Activated B cell treated with CpG ODN at 0.5 μM for 24 hours (primary cell): ENCODE measurements at regions of chrX and their contacts with region 1.

Region 1: GRCh38 chrX:71095543-71095911 is at the start of gene FOXO4:
- DNase-seq: peak; percentile 72
- ATAC-seq: peak; percentile 90
- H3K4me3 Mint-ChIP-seq: peak within 1 kb of the TSS; percentile 95
- H3K27ac Mint-ChIP-seq: peak within 1 kb of the TSS; percentile 93
- H3K4me1 Mint-ChIP-seq: peaks cover 26% of the 10 kb centered on the region
- H3K27me3 Mint-ChIP-seq: no peaks in the 10 kb centered on the region
- CTCF ChIP-seq: no peak
- total RNA-seq, gene FOXO4: 10.1 and 16.1 TPM in 2 replicates

Region 2: GRCh38 chrX:70133303-70134115 is 962.0 kb before region 1 on chrX and contains the start of gene IGBP1:
- CTCF ChIA-PET with region 1: no interaction called
- POLR2A ChIA-PET with region 1: no interaction called
- intact Hi-C with region 1: loop called (anchors 10 kb)
- DNase-seq: peak; percentile 57
- ATAC-seq: peak; percentile 82
- H3K4me3 Mint-ChIP-seq: peak within 1 kb of the TSS; percentile 99
- H3K27ac Mint-ChIP-seq: peak within 1 kb of the TSS; percentile 96
- H3K4me1 Mint-ChIP-seq: peaks cover 29% of the 10 kb centered on the region
- H3K27me3 Mint-ChIP-seq: no peaks in the 10 kb centered on the region
- CTCF ChIP-seq: no peak
- total RNA-seq, gene IGBP1: 51.6 and 52.7 TPM in 2 replicates

Region 3: DNA sequence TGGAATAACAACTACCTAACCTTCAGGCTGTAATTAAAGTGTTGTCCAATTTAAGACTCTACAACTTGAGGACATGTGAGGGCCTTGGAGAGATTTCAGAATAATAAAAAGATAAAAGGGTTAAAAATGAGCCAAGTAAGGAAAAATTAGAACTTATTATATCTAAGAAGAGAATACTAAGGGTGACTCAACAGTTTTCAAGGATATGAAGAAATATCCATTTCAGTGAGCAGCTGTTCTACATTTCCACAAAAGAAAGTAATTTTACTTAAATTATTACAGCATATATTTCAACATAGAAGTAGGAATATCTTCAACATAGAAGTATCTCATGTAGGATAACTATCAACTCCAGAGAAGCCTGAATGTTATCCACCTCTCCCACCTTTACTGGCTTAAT is 38.7 kb before region 1 on chrX:
- CTCF ChIA-PET with region 1: no interaction called
- POLR2A ChIA-PET with region 1: no interaction called
- intact Hi-C with region 1: no loop called
- DNase-seq: no peak
- ATAC-seq: no peak
- H3K4me3 Mint-ChIP-seq: no peak overlapping the region
- H3K27ac Mint-ChIP-seq: no peak overlapping the region
- H3K4me1 Mint-ChIP-seq: peaks cover 16% of the 10 kb centered on the region
- H3K27me3 Mint-ChIP-seq: no peaks in the 10 kb centered on the region
- CTCF ChIP-seq: no peak

Region 4: GRCh38 chrX:71111141-71111843 is 15.8 kb after region 1 on chrX and contains the start of gene IL2RG:
- CTCF ChIA-PET with region 1: interaction called, 17 read pairs
- POLR2A ChIA-PET with region 1: interaction called, 76 read pairs
- intact Hi-C with region 1: loop called (anchors 1 kb)
- DNase-seq: peak; percentile 37
- ATAC-seq: peak; percentile 90
- H3K4me3 Mint-ChIP-seq: peak within 1 kb of the TSS; percentile 95
- H3K27ac Mint-ChIP-seq: peak within 1 kb of the TSS; percentile 99
- H3K4me1 Mint-ChIP-seq: peaks cover 67% of the 10 kb centered on the region
- H3K27me3 Mint-ChIP-seq: no peaks in the 10 kb centered on the region
- CTCF ChIP-seq: no peak
- total RNA-seq, gene IL2RG: 261 and 264 TPM in 2 replicates

Region 5: GRCh38 chrX:71118032-71118984 is 22.8 kb after region 1 on chrX and contains the start of gene MED12:
- CTCF ChIA-PET with region 1: interaction called, 10 read pairs
- POLR2A ChIA-PET with region 1: interaction called, 89 read pairs
- intact Hi-C with region 1: loop called (anchors 1 kb)
- DNase-seq: peak; percentile 76
- ATAC-seq: peak; percentile 96
- H3K4me3 Mint-ChIP-seq: peak within 1 kb of the TSS; percentile 85
- H3K27ac Mint-ChIP-seq: peak within 1 kb of the TSS; percentile 89
- H3K4me1 Mint-ChIP-seq: peaks cover 16% of the 10 kb centered on the region
- H3K27me3 Mint-ChIP-seq: no peaks in the 10 kb centered on the region
- CTCF ChIP-seq: no peak
- total RNA-seq, gene MED12: 81.7 and 102 TPM in 2 replicates

Region 6: DNA sequence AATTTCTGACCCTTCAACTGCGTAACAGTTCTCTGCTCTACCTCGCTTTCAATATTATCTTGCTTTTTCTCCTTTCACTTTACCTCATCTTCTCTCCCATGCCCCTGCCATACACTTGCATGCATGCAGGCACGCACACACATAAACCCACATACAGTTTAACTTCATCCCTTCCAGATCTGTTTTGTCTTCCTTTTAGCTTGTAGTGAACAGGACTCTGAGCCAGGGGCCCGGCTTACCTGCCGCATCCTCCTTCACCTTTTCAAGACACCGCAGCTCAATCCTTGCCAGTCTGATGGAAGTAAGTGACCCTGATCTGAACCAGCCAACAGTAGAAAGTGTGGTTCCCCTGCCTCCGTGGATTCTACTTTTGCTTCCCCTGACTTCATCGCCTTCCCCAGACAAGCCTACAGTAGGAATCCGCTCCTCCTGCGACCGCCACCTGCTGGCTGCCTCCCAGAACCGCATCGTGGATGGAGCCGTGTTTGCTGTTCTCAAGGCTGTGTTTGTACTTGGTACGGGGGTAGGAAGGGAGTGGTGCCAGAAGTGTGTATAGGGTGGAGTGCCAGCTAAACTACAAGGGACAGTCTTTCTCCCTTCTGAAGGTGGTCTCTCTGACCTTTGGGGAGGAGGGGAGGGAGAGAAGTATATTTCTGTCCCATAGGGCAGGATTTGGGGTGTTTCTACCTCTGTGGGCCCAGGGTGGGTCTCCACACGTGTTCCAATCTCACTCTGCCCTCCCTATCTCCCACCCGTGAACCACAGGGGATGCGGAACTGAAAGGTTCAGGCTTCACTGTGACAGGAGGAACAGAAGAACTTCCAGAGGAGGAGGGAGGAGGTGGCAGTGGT is 33.6 kb after region 1 on chrX:
- CTCF ChIA-PET with region 1: interaction called, 32 read pairs
- POLR2A ChIA-PET with region 1: interaction called, 8 read pairs
- intact Hi-C with region 1: loop called (anchors 1 kb)
- DNase-seq: peak; percentile 52
- ATAC-seq: peak; percentile 94
- H3K4me3 Mint-ChIP-seq: no peak overlapping the region
- H3K27ac Mint-ChIP-seq: peak overlapping the region; percentile 19
- H3K4me1 Mint-ChIP-seq: peaks cover 9% of the 10 kb centered on the region
- H3K27me3 Mint-ChIP-seq: no peaks in the 10 kb centered on the region
- CTCF ChIP-seq: no peak

Region 7: DNA sequence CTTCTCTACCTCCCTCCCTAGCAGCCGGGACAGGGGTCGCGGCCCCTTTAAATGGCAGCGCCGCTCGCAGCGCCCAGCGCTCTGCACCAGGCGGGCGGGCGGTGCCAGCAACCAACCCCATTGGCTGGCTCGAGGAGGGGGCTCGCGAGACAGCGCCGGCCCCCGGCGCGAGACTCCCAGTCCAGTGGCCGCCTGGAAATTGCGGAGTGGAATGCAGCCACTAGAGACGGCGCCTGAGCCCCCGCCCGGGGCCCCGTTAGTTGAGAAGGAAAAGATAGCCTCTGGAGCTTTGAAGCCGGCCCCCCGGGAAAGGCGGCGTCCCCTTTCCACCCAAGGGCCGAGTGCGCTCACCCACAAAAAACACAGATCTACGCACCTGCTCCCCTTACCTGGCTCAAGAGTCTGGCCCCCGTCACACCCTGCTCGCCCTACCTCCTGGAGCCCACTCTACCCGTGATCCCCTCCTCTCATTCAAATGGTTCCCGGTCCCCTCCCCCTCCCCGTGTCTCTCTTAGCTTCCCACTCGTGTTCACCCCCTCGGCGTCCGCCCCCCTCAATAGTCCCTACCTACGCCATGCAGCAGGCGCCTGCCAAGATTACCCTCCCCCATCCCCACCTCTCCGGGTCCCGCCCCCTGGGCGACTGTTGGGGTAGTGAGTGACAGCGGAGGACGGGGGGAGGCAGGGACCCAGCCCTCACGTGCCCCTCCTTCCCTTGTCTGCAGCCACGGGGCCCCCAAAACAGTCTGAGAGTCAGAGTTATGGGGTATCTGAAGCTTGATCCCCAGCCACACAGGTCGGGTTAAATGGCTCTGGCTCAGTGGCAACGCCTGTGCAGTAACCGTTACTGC is 158.8 kb after region 1 on chrX and contains the start of gene ZMYM3:
- CTCF ChIA-PET with region 1: no interaction called
- POLR2A ChIA-PET with region 1: no interaction called
- intact Hi-C with region 1: loop called (anchors 1 kb)
- DNase-seq: peak; percentile 64
- ATAC-seq: peak; percentile 85
- H3K4me3 Mint-ChIP-seq: peak within 1 kb of the TSS; percentile 93
- H3K27ac Mint-ChIP-seq: peak within 1 kb of the TSS; percentile 87
- H3K4me1 Mint-ChIP-seq: peaks cover 21% of the 10 kb centered on the region
- H3K27me3 Mint-ChIP-seq: no peaks in the 10 kb centered on the region
- CTCF ChIP-seq: no peak
- total RNA-seq, gene ZMYM3: 27.9 and 28.2 TPM in 2 replicates

Region 8: GRCh38 chrX:71365876-71366673 is 270.5 kb after region 1 on chrX and contains the start of gene TAF1:
- CTCF ChIA-PET with region 1: no interaction called
- POLR2A ChIA-PET with region 1: interaction called, 3 read pairs
- intact Hi-C with region 1: loop called (anchors 1 kb)
- DNase-seq: peak; percentile 69
- ATAC-seq: peak; percentile 87
- H3K4me3 Mint-ChIP-seq: peak within 1 kb of the TSS; percentile 99
- H3K27ac Mint-ChIP-seq: peak within 1 kb of the TSS; percentile 99
- H3K4me1 Mint-ChIP-seq: peaks cover 21% of the 10 kb centered on the region
- H3K27me3 Mint-ChIP-seq: no peaks in the 10 kb centered on the region
- CTCF ChIP-seq: no peak
- total RNA-seq, gene TAF1: 64.0 and 70.0 TPM in 2 replicates

Region 9: GRCh38 chrX:71543316-71543715 is 447.8 kb after region 1 on chrX:
- CTCF ChIA-PET with region 1: no interaction called
- POLR2A ChIA-PET with region 1: no interaction called
- intact Hi-C with region 1: no loop called
- DNase-seq: no peak
- ATAC-seq: peak; percentile 8
- H3K4me3 Mint-ChIP-seq: peak overlapping the region; percentile 52
- H3K27ac Mint-ChIP-seq: peak overlapping the region; percentile 76
- H3K4me1 Mint-ChIP-seq: peaks cover 51% of the 10 kb centered on the region
- H3K27me3 Mint-ChIP-seq: no peaks in the 10 kb centered on the region
- CTCF ChIP-seq: no peak